ENCODE measurements at regions of chr10 and their contacts with region 1.

Region 1: DNA sequence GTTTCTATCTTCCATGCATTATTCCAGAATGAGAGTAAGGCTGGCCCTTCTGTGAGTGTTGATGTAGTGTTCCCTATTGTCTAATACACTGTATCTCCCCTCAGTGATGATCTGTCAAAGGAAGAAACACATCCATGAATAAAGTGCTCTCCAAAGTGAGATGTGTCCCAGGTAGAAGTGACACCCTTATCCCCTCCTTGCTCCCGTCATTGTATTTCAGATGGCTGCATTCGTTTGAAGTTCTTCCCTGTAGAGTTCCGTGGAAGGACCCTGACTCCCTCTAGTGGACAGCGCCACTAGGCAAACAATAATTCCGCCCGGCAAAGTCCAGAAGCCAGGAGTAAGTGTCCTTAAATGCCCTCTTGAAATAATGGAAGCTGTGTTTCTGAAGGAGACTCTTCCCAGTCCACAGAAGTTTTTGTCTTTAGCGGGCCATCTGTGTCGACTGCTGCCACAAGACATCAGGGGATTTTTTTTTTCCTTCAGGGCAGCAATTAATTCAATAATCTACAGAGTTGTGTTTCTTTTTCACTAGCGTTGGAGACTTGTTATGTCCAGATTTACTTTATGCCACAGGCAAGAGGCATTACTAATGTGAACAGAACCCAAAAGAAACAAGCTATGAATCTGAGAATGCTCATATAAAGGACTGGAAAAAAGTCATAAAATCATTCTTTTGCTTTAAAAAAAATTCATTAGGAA is 64.6 kb downstream of the THNSL1 start:
- DNase-seq: peak; percentile 79 to 86
- ATAC-seq: peak; percentile 84 to 93
- H3K4me3 ChIP-seq: no peak overlapping the region
- H3K27ac ChIP-seq: peak overlapping the region; percentile 48 to 69; a peak in 4 of 6 replicates
- H3K4me1 ChIP-seq: peaks cover 53% of the 10 kb centered on the region
- CTCF ChIP-seq: peak; percentile 94
- EP300 ChIP-seq: no peak
- POLR2A ChIP-seq: no peak
- RAD21 ChIP-seq: peak; percentile 96 to 97

Region 2: DNA sequence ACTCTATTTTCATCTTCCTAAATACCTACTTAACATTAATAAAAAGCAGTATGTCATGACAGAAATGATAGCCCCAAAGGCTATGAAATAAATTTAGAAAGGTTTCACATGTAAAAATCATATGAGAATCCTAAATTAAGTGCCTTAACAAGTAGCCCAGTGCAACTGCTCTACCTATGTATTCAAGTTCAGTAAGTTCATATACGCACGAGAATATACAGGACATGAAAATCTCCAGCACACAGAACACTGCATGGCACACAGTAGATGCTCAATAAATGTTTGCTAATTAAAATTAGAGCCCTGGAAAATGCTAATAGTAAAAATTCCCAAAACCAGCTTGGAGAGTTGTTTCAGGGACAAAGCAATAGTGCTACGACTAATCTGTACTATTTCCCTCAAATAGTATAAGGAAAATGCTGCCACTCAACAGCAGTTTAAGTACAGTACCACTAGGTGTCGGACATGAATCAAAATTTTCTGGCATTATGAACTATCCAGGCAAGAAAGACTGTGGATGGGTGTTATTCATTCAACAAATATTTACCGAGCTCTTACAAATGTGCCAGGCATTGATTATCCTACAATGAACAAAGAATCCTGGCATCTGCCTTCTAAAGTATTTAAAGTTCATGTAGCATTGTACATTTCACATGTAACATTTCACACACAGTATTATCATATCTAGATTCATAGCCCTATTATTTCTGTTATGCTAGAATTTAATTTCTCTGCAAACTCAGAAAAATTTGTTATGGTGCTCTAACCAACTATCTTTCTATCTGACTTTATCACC is 438.2 kb before region 1 on chr10:
- CTCF ChIA-PET with region 1: interaction called, 23 read pairs
- POLR2A ChIA-PET with region 1: no interaction called
- DNase-seq: peak; percentile 62 to 82
- ATAC-seq: peak; percentile 98
- H3K4me3 ChIP-seq: no peak overlapping the region
- H3K27ac ChIP-seq: peak overlapping the region in 1 of 2 experiments; percentile 34; a peak in 3 of 6 replicates
- H3K4me1 ChIP-seq: peaks cover 24% of the 10 kb centered on the region
- CTCF ChIP-seq: peak; percentile 95
- EP300 ChIP-seq: no peak
- POLR2A ChIP-seq: no peak
- RAD21 ChIP-seq: peak; percentile 94 to 97

Region 3: DNA sequence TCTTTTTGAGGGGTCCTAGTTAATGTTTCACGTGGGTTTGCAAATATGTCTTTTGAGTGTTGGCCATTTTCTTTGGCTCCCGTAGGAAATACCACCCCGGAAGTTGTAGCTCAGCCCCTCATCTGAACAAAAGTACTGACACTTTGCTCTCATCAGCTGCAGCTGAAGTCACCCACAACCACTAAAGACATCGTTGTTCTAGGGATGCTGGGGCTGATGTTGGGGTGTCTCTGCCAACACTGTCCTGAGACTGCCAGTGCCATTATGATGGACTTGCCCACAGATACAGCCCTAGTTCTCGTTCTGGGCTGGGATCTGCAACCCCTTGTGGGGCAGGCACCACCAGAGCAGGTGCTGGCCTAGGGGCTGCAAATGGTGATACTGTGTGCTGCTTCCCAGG is 274.8 kb before region 1 on chr10:
- CTCF ChIA-PET with region 1: no interaction called
- POLR2A ChIA-PET with region 1: no interaction called
- DNase-seq: no peak
- ATAC-seq: no peak
- H3K4me3 ChIP-seq: no peak overlapping the region
- H3K27ac ChIP-seq: no peak overlapping the region
- H3K4me1 ChIP-seq: no peaks in the 10 kb centered on the region
- CTCF ChIP-seq: no peak
- EP300 ChIP-seq: no peak
- POLR2A ChIP-seq: no peak
- RAD21 ChIP-seq: no peak

Region 4: GRCh38 chr10:25026463-25026862 is 54.6 kb before region 1 on chr10:
- CTCF ChIA-PET with region 1: interaction called, 67 read pairs
- POLR2A ChIA-PET with region 1: no interaction called
- DNase-seq: peak in 1 of 2 experiments; percentile 10
- ATAC-seq: no peak
- H3K4me3 ChIP-seq: no peak overlapping the region
- H3K27ac ChIP-seq: no peak overlapping the region
- H3K4me1 ChIP-seq: no peaks in the 10 kb centered on the region
- CTCF ChIP-seq: peak; percentile 53
- EP300 ChIP-seq: no peak
- POLR2A ChIP-seq: no peak
- RAD21 ChIP-seq: peak; percentile 62 to 69

Region 5: GRCh38 chr10:25049966-25050365 is 31.1 kb before region 1 on chr10:
- CTCF ChIA-PET with region 1: interaction called, 19 read pairs
- POLR2A ChIA-PET with region 1: no interaction called
- DNase-seq: no peak
- ATAC-seq: no peak
- H3K4me3 ChIP-seq: no peak overlapping the region
- H3K27ac ChIP-seq: no peak overlapping the region
- H3K4me1 ChIP-seq: no peaks in the 10 kb centered on the region
- CTCF ChIP-seq: no peak
- EP300 ChIP-seq: no peak
- POLR2A ChIP-seq: no peak
- RAD21 ChIP-seq: no peak

Region 6: DNA sequence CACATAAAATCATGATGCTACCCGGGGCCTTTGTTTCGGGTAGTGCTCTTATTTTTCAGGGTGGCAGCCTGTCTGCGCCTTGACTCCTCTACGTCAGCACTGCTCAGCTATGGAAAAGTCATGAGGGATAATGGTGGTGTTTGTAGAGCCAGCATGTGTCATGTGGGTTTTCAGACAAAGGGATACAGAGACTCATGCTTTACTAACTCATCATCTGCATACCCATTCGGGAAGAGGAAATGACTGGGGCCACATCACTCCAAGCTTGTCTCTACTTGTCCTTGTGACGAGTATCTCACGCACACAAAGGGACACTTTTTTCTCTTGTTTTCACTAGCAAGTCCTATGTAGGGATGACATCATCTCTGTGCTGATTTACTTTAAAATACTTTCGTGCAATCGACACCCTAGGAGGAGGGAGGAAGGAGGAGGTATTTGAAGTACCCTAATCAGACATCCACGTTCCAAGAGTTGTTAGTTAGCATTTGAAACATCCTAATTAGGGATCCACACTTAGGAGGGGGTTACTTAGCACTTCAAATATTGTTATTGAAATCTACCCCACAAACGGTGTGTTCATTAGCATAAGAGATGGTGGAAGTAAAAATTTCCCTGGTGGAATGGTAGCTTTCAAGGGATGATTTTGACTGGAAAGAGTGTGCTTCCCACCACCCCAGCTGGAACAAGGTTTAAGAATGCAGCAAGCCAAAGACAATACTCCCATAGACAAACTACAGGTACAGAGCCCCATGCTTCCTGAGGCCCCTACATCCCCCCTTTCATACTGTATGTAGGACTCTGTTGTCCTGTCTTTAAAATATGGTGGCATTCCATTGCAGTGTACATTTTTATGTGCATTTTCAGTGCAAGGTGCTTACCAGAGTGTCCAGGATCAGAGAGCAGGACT is 12.6 kb before region 1 on chr10:
- CTCF ChIA-PET with region 1: interaction called, 47 read pairs
- POLR2A ChIA-PET with region 1: no interaction called
- DNase-seq: no peak
- ATAC-seq: no peak
- H3K4me3 ChIP-seq: no peak overlapping the region
- H3K27ac ChIP-seq: no peak overlapping the region
- H3K4me1 ChIP-seq: no peaks in the 10 kb centered on the region
- CTCF ChIP-seq: no peak
- EP300 ChIP-seq: no peak
- POLR2A ChIP-seq: no peak
- RAD21 ChIP-seq: no peak

Region 7: DNA sequence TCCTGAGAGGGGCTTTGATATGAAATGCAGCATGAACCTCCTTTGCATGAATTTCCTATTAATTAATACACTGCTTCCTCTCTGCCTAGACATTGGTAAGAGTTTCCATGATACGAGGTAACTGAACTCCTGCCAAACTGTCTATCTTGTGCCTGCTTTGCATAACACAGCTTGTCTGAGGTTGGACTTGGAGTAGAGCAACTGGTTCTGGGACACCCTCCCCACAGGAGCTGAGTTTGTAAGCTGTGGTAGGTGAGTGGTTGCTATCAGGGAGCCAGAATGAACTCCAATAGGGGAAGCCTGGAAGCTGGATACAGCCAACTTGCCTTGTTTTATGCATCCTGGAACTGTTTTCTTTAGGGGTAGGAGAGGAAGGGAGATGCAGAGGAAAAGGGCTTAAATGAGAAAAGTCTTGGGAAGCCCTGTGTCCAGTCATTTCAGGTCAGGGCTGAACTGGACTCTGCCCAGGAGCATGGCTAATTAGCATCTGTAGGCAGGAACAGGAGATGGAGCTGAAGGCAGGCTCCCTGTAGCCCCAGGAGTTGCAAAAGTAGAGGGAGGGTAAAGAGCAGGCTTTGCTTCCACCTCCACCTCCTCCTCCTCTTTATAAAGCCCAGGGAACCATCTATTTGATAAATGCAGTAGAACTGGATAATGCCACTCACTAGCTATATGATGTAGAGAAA is 20.6 kb after region 1 on chr10:
- CTCF ChIA-PET with region 1: interaction called, 14 read pairs
- POLR2A ChIA-PET with region 1: no interaction called
- DNase-seq: no peak
- ATAC-seq: no peak
- H3K4me3 ChIP-seq: no peak overlapping the region
- H3K27ac ChIP-seq: no peak overlapping the region
- H3K4me1 ChIP-seq: no peaks in the 10 kb centered on the region
- CTCF ChIP-seq: no peak
- EP300 ChIP-seq: no peak
- POLR2A ChIP-seq: no peak
- RAD21 ChIP-seq: no peak